Mammary epithelial cell (primary cell): ENCODE measurements at regions of chr13 and their contacts with region 1.

Region 1: DNA sequence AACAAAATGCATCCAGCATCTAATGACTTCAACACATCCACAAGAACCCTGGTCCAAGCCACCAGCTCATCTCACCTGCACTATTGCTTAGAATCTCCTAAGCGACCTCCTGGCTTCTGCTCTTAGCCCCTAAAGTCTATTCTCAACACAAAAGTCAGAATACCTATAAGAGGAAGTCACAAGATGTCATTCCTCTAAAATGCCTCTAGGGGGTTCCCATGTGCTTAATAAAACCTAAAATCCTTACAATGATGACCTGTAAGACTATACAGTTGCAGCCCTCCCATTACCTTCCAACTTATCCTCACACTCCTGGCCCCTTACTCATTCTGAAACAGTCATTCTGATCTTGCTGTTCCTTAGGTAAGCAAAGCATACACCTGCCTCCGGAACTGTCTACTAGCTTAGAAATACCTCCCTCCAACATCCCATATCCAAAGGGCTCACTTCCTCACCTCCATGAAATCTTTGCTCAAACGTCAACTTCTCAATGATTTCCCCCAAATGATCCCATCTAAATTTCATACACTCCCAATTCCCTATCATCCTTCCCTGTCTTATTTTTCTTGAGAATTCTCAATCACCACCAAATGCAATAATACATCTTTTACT is 10.0 kb downstream of the ATP7B start:
- DNase-seq: no peak
- H3K4me3 ChIP-seq: no peak overlapping the region
- H3K27ac ChIP-seq: no peak overlapping the region
- H3K4me1 ChIP-seq: peaks cover 18% of the 10 kb centered on the region
- H3K27me3 ChIP-seq: no peaks in the 10 kb centered on the region
- CTCF ChIP-seq: peak; percentile 59 to 64

Region 2: DNA sequence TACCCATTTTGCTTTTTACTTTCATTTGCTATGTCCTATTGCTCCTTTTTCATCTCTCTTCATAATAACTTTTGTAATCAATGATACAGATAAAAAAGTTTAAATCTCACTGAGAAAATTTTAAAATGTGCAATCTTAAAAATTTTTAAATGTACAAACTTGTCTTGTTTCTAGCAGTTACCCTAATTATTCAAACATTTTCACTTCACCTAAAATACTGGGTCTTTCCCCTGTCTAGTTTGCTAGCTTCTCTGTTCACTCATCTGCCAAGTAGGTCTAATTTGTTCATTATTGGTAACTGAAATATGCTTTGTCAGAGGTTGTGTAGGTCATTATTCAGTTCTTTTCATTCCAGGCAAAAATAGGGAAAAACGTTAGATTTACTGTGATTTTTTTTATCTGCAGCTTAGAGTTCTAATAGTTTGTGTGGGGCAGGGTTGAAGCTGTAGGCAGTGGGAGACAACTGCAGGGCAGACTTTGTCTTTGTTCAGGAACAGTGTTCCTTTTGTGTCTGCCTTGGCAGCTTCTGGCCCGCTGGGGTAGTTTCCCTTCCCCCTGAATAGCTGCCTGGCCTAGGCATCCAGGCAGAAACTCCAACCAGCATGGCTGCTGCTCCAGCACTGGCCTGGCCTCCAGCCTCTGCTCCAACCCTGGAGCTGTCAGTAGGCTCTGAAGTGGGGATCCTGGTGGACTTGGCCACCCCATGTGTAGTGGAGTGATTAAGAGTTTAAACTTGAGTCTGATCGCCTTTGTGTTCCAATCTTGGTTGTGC is 368.4 kb before region 1 on chr13:
- CTCF ChIA-PET with region 1: no interaction called
- dilution Hi-C with region 1: no loop called
- in situ Hi-C with region 1: no loop called
- intact Hi-C with region 1: no loop called
- DNase-seq: peak; percentile 55
- H3K4me3 ChIP-seq: peak overlapping the region in 1 of 3 experiments; percentile 10
- H3K27ac ChIP-seq: peak overlapping the region; percentile 70
- H3K4me1 ChIP-seq: peaks cover 28% of the 10 kb centered on the region
- H3K27me3 ChIP-seq: no peaks in the 10 kb centered on the region
- CTCF ChIP-seq: no peak

Region 3: DNA sequence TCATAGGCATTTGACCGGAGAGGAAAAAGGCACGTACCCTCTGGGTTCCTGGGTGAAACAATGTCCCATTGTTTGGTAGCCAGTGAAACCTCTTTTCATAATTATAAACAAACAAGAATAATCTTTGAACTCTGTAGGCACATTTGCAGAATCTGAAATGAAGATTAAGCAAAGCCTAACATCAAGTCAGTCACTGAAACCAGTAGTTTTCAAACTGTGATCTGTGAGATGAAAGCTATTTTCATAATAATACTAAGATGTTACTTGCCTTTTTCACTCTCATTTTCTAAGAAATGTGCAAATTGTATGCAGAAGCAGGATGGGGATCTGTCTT is 311.6 kb before region 1 on chr13:
- CTCF ChIA-PET with region 1: no interaction called
- dilution Hi-C with region 1: no loop called
- in situ Hi-C with region 1: no loop called
- intact Hi-C with region 1: no loop called
- DNase-seq: peak; percentile 52
- H3K4me3 ChIP-seq: no peak overlapping the region
- H3K27ac ChIP-seq: peak overlapping the region; percentile 40
- H3K4me1 ChIP-seq: peaks cover 11% of the 10 kb centered on the region
- H3K27me3 ChIP-seq: no peaks in the 10 kb centered on the region
- CTCF ChIP-seq: no peak

Region 4: GRCh38 chr13:52194184-52194868 is 193.1 kb after region 1 on chr13:
- CTCF ChIA-PET with region 1: no interaction called
- dilution Hi-C with region 1: no loop called
- in situ Hi-C with region 1: no loop called
- intact Hi-C with region 1: loop called (anchors 2 kb)
- DNase-seq: peak; percentile 83
- H3K4me3 ChIP-seq: peak overlapping the region; percentile 70 to 81 (median 75)
- H3K27ac ChIP-seq: peak overlapping the region; percentile 54
- H3K4me1 ChIP-seq: peaks cover 12% of the 10 kb centered on the region
- H3K27me3 ChIP-seq: no peaks in the 10 kb centered on the region
- CTCF ChIP-seq: no peak